ENCODE measurements at regions of chr6 and their contacts with region 1.

Region 1: DNA sequence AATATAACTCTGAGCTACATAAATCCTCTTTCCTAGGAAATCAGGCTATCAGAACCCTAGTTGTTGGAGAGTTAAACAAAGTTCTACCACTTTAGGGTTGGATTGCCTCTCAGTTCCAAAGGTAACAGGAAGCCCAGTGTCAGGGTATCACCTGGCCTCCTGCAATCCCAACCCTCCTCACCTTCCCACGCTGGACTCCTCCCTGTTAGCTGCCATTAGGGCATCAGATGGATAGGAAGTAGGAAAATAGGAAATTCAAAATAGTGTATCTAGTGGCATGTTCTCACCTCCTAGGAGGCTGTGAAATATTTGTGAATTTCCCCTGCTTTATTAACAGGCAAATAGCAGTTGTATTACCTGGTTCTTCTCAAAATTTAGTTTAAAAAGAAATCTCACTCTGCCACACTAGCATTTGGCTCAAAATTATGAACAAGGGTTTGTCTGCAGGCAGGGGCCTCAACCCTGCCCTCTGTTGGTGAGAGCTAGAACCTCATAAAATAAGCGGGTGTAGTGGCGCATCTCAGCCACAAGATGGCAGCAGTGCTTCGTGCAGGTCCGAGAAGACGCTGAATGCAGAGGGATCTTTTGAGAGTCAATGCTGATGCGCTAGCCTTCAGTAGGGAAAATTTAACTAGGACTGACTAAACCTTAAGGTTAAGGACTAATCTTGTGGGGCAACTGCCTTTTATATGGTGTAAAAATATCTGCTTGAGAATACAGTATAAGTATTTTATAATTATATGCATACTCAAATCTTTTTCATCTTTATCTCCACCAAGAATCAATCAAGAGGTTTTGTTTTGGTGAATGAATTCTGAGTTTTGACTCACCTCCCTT is 209.8 kb upstream of the KCNQ5 start:
- H3K4me3 ChIP-seq: no peak overlapping the region
- H3K27ac ChIP-seq: no peak overlapping the region
- H3K4me1 ChIP-seq: no peaks in the 10 kb centered on the region
- CTCF ChIP-seq: peak; percentile 98

Region 2: DNA sequence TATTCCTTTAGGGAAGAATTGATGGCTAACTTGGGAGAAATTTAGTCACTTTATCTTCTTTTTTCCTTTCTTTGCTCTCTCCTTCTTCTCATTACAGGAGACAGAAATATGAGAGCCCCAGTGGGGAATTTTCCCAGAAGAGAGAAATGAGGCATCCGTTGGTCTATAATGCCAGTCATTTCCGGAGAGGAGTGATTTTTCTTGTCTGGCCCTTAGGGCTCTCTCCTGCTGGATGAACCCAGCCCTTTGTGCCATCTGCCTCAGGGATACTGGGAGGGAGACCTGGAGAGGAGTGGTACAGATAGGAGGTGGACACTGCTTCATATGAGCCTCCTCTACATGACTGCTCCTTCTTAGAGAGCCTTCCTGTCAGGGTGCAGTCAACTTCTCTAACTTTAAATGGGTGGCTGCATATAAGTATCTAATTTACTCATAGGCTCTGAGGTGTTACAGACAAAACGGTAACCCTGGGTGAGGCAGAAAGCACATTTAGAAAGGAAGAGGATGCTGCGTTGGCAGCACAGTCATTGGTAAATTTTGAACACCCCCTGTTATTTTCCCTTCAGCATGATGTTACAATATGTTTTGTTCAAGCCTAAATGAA is 503.8 kb before region 1 on chr6:
- CTCF ChIA-PET with region 1: no interaction called
- POLR2A ChIA-PET with region 1: no interaction called
- H3K4me3 ChIP-seq: no peak overlapping the region
- H3K27ac ChIP-seq: no peak overlapping the region
- H3K4me1 ChIP-seq: no peaks in the 10 kb centered on the region
- CTCF ChIP-seq: no peak

Region 3: DNA sequence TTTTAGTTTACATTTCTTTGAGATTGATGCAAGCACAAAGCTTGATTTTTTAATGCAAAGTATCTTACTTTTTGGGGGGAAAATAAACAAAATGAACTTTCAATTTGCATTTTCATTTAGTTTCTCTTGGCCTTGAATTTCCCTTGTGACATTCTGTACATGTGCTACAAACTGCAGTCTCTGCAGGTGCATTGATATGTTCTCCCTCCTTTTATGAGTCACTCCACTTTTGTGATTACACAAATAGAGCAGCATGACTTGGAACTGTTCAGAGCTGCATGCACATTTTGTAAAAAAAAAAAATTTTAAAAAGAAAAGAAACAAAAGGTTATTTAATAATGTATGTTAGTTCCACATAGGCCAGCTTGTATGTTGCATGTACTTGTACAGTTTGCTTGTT is 10.2 kb before region 1 on chr6:
- CTCF ChIA-PET with region 1: interaction called, 16 read pairs
- POLR2A ChIA-PET with region 1: no interaction called
- H3K4me3 ChIP-seq: no peak overlapping the region
- H3K27ac ChIP-seq: no peak overlapping the region
- H3K4me1 ChIP-seq: 0 out of 2 replicates have a peak, but pooled peaks cover 5% of the 10 kb centered on the region
- CTCF ChIP-seq: no peak

Region 4: DNA sequence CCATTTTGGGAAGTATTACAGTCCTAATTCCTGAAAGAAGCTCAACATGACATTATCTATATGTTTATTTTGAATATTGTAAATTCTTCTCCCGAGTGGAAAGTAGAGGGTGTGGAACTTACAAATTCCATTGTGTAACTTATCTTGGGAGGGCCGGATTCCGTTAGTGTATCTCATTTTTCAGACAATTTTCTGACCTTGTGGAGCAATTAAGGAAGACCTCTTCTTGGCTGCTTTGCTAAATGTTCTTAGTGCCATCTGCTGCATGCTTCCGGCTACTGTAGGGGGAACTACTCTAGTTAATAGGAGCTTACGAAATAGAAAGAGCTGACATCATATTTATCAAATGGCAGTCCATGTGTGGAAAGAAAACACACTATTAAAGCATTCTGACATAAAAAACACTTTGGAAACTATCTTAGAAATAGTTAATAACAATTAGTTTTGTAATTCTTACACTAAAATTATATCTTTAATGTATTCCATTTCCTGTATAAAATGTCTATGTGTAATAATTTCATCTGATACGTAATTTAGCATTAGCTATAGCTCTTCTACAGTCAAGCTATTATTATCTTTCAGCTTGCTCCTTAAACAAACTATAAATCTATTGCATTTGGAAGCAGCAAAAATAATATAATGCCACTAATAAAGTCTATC is 168.3 kb after region 1 on chr6:
- CTCF ChIA-PET with region 1: interaction called, 92 read pairs
- POLR2A ChIA-PET with region 1: no interaction called
- H3K4me3 ChIP-seq: no peak overlapping the region
- H3K27ac ChIP-seq: no peak overlapping the region
- H3K4me1 ChIP-seq: no peaks in the 10 kb centered on the region
- CTCF ChIP-seq: peak; percentile 44

Region 5: GRCh38 chr6:72748759-72749158 is 336.7 kb after region 1 on chr6:
- CTCF ChIA-PET with region 1: no interaction called
- POLR2A ChIA-PET with region 1: no interaction called
- H3K4me3 ChIP-seq: no peak overlapping the region
- H3K27ac ChIP-seq: no peak overlapping the region
- H3K4me1 ChIP-seq: no peaks in the 10 kb centered on the region
- CTCF ChIP-seq: no peak

Region 6: DNA sequence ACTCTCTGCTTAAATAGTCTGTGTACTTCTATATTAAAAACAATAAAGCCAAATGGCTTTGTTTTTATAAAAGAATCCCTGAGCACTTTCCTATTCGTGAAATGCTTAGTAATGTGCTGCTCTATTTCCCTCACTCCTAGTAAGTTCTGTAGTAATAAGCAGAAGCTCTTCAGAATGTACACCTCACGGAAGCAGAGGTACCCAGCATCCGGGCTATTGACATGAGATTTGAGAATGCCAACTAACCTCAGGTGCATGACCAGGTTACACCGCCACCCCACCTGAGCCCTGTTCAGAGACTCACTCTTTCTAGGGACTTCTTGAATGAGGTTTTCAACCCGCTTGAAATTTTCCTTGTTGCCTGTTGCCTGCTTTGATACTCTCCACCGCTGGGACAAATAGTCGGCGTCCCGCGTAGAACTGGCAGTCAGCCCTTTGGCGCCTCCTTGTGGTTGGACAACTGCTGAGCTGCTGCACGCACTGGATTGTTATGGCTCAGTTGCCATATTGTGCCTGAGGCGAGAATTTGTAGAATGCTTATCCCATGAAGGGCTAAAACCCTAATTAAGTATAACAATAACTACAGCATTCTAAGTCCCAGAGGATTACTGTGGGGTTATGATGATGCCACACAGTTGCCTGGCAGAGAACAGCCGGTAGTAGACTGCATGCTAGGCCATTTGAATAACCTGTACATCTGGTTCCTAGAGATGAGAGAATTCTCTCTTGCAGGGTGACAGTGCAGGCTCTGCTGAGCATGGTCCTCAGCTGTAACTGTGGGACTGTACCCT is 717.8 kb after region 1 on chr6:
- CTCF ChIA-PET with region 1: interaction called, 49 read pairs
- POLR2A ChIA-PET with region 1: no interaction called
- H3K4me3 ChIP-seq: no peak overlapping the region
- H3K27ac ChIP-seq: no peak overlapping the region
- H3K4me1 ChIP-seq: no peaks in the 10 kb centered on the region
- CTCF ChIP-seq: peak; percentile 91

Measured in HEK293 (cell line).